Dorsolateral prefrontal cortex (tissue), 120 donors: ENCODE measurements at regions of chr5 and their contacts with region 1.

Region 1: GRCh38 chr5:177554474-177555111 is at the start of gene FAM193B:
- DNase-seq: peak; percentile 92 to 96 (median 94)
- H3K4me3 ChIP-seq: peak within 1 kb of the TSS; percentile 63 to 100 (median 90)
- H3K27ac ChIP-seq: peak within 1 kb of the TSS in 58 of 59 donors; percentile 31 to 89 (median 80)
- H3K27me3 ChIP-seq: no peaks in the 10 kb centered on the region
- CTCF ChIP-seq: peak in 30 of 56 donors; percentile 4 to 49 (median 23)
- total RNA-seq, gene FAM193B: 91.8 to 259 (median 127) TPM

Region 2: GRCh38 chr5:177516604-177517568 is 37.7 kb before region 1 on chr5 and contains the start of gene DDX41:
- intact Hi-C with region 1: loop called (anchors 2 to 5 kb)
- DNase-seq: peak; percentile 95 to 98 (median 97)
- H3K4me3 ChIP-seq: peak within 1 kb of the TSS; percentile 60 to 100 (median 93)
- H3K27ac ChIP-seq: peak within 1 kb of the TSS; percentile 4 to 95 (median 87)
- H3K27me3 ChIP-seq: no peaks in the 10 kb centered on the region
- CTCF ChIP-seq: peak in 40 of 56 donors; percentile 10 to 58 (median 36)
- total RNA-seq, gene DDX41: 59.7 to 128 (median 92.7) TPM

Region 3: GRCh38 chr5:177537389-177538361 is 16.9 kb before region 1 on chr5:
- intact Hi-C with region 1: no loop called
- DNase-seq: peak in 4 of 10 donors; percentile 49 to 62 (median 54)
- H3K4me3 ChIP-seq: peak overlapping the region in 1 of 59 donors; percentile 11
- H3K27ac ChIP-seq: peak overlapping the region in 43 of 59 donors; percentile 7 to 75 (median 52)
- H3K27me3 ChIP-seq: no peaks in the 10 kb centered on the region
- CTCF ChIP-seq: no peak

Region 4: GRCh38 chr5:177592010-177592834 is 37.6 kb after region 1 on chr5 and contains the start of gene TMED9:
- intact Hi-C with region 1: loop called (anchors 2 to 5 kb)
- DNase-seq: peak; percentile 73 to 94 (median 84)
- H3K4me3 ChIP-seq: peak within 1 kb of the TSS; percentile 50 to 98 (median 92)
- H3K27ac ChIP-seq: peak within 1 kb of the TSS in 53 of 59 donors; percentile 11 to 90 (median 62)
- H3K27me3 ChIP-seq: peaks cover 0 to 6% (median 0%) of the 10 kb centered on the region in 45 donors
- CTCF ChIP-seq: peak in 46 of 56 donors; percentile 11 to 58 (median 41)
- total RNA-seq, gene TMED9: 47.5 to 89.0 (median 63.8) TPM

Region 5: DNA sequence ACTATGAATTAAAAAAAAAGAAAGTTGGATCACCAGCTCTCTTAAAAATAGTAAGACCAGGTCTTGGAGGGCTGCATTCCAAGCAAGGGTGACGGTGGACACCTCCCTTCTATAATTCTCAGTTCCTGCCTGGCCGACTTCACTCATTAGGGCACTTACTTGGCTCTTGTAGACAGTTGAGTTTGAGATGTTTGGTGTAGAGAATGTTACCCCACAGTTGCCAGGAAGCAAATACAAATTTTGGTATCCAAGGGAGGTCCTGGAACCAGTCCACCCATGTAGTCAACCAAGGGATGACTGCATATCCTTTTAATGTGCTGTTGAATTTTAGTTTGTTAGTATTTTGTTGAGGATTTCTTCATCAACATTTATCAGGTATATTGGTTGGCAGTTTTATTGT is 66.0 kb after region 1 on chr5:
- intact Hi-C with region 1: no loop called
- DNase-seq: no peak
- H3K4me3 ChIP-seq: no peak overlapping the region
- H3K27ac ChIP-seq: no peak overlapping the region
- H3K27me3 ChIP-seq: no peaks in the 10 kb centered on the region
- CTCF ChIP-seq: no peak